ENCODE measurements at regions of chr3 and their contacts with region 1.

Region 1: GRCh38 chr3:178658694-178659325 is 122.6 kb downstream of the KCNMB2 start:
- DNase-seq: no peak
- ATAC-seq: no peak
- H3K4me3 ChIP-seq: no peak overlapping the region
- H3K27ac ChIP-seq: no peak overlapping the region
- H3K4me1 ChIP-seq: no peaks in the 10 kb centered on the region
- H3K27me3 ChIP-seq: no peaks in the 10 kb centered on the region
- CTCF ChIP-seq: no peak
- POLR2A ChIP-seq: no peak
- RAD21 ChIP-seq: no peak

Region 2: DNA sequence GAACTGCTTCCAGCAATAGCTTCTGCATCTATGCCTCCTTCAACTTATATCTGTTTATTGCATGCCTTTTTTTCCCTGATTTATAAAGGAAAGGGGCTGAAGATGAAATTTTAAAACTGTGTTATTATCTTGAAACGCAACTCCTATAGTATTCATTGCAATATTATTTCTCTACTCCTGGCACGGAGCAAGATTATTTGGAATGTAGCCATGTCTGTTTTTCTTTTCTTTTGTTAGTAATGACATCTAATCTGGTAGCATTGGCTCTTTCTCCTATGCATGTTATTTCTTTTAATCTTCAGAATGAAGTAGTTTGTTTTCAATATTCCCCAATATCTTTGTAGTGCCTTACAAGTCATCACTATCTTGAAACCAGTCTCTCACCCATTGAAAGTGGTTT is 89.0 kb before region 1 on chr3:
- CTCF ChIA-PET with region 1: no interaction called
- POLR2A ChIA-PET with region 1: no interaction called
- dilution Hi-C with region 1: no loop called
- in situ Hi-C with region 1: no loop called
- intact Hi-C with region 1: no loop called
- DNase-seq: no peak
- ATAC-seq: no peak
- H3K4me3 ChIP-seq: no peak overlapping the region
- H3K27ac ChIP-seq: no peak overlapping the region
- H3K4me1 ChIP-seq: no peaks in the 10 kb centered on the region
- H3K27me3 ChIP-seq: no peaks in the 10 kb centered on the region
- CTCF ChIP-seq: no peak
- POLR2A ChIP-seq: no peak
- RAD21 ChIP-seq: no peak

Region 3: GRCh38 chr3:178623666-178624255 is 35.0 kb before region 1 on chr3:
- CTCF ChIA-PET with region 1: no interaction called
- POLR2A ChIA-PET with region 1: interaction called, 17 read pairs
- dilution Hi-C with region 1: no loop called
- in situ Hi-C with region 1: no loop called
- intact Hi-C with region 1: no loop called
- DNase-seq: no peak
- ATAC-seq: no peak
- H3K4me3 ChIP-seq: no peak overlapping the region
- H3K27ac ChIP-seq: no peak overlapping the region
- H3K4me1 ChIP-seq: no peaks in the 10 kb centered on the region
- H3K27me3 ChIP-seq: no peaks in the 10 kb centered on the region
- CTCF ChIP-seq: no peak
- POLR2A ChIP-seq: no peak
- RAD21 ChIP-seq: no peak

Region 4: DNA sequence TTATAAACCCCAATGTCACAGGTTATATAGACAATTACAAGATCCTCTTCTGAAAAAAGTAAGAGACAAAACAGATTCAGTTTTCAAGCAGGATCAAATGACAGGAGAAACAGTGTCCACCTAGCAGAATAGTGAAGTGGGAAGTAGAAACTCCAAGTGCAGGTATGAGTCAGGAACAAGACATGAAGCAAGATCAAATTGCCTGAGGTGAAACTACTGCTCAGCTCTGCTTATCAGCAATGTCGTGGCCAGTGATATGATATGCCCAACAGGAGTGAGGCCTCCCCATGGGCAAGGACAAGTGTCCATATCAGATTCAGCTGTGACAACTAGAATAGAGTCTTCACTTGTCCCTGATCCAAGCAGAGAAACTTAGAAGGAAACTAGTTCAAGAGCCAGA is 312.8 kb after region 1 on chr3:
- CTCF ChIA-PET with region 1: no interaction called
- POLR2A ChIA-PET with region 1: no interaction called
- dilution Hi-C with region 1: no loop called
- in situ Hi-C with region 1: no loop called
- intact Hi-C with region 1: no loop called
- DNase-seq: peak; percentile 18
- ATAC-seq: peak; percentile 11; the same call in 1 of the 2 replicates
- H3K4me3 ChIP-seq: no peak overlapping the region
- H3K27ac ChIP-seq: no peak overlapping the region
- H3K4me1 ChIP-seq: no peaks in the 10 kb centered on the region
- H3K27me3 ChIP-seq: no peaks in the 10 kb centered on the region; the same call in 1 of the 2 replicates
- CTCF ChIP-seq: no peak
- POLR2A ChIP-seq: no peak
- RAD21 ChIP-seq: no peak

Region 5: GRCh38 chr3:179760944-179761343 is 1102.1 kb after region 1 on chr3:
- CTCF ChIA-PET with region 1: no interaction called
- POLR2A ChIA-PET with region 1: no interaction called
- dilution Hi-C with region 1: no loop called
- in situ Hi-C with region 1: no loop called
- intact Hi-C with region 1: no loop called
- DNase-seq: peak; percentile 79
- ATAC-seq: peak; percentile 35; the same call in 1 of the 2 replicates
- H3K4me3 ChIP-seq: no peak overlapping the region
- H3K27ac ChIP-seq: no peak overlapping the region
- H3K4me1 ChIP-seq: no peaks in the 10 kb centered on the region
- H3K27me3 ChIP-seq: no peaks in the 10 kb centered on the region
- CTCF ChIP-seq: no peak
- POLR2A ChIP-seq: no peak
- RAD21 ChIP-seq: no peak